Activated CD4-positive, alpha-beta T cell treated with anti-CD3 and anti-CD28 coated beads, Interleukin-2, amount 10 ng/mL, durations not matched to agents 24 days and 14 days (primary cell): ENCODE measurements at regions of chr2 and their contacts with region 1.

Region 1: DNA sequence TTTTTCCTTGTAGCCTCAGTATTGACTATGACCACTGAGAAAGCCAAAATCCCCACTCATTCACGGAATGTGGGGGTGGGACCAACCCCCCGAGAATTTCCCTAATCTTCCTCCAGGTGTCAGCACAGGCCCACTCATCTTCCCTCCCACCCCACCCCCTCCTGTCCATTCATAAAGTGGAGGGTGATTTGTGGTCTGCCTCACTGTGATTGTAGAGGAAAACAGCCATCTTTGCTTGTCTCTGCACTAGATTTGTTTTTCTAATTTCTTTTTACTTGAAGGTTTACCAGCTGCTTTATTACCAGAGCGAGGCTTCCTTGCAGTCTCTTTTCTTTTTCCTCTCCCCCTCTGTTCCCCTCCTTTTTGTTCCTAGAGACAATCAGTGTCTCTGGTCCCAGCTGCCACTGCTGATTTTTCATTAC is 171.8 kb downstream of the ICOS start:
- DNase-seq: peak; percentile 81
- H3K4me3 Mint-ChIP-seq: peak overlapping the region; percentile 75
- H3K27ac Mint-ChIP-seq: peak overlapping the region; percentile 93
- H3K4me1 Mint-ChIP-seq: peaks cover 64% of the 10 kb centered on the region
- H3K27me3 Mint-ChIP-seq: no peaks in the 10 kb centered on the region

Region 2: GRCh38 chr2:203543898-203544328 is 564.4 kb before region 1 on chr2:
- intact Hi-C with region 1: no loop called
- DNase-seq: no peak
- H3K4me3 Mint-ChIP-seq: no peak overlapping the region
- H3K27ac Mint-ChIP-seq: no peak overlapping the region
- H3K4me1 Mint-ChIP-seq: peaks cover 7% of the 10 kb centered on the region
- H3K27me3 Mint-ChIP-seq: peaks cover 19% of the 10 kb centered on the region

Region 3: DNA sequence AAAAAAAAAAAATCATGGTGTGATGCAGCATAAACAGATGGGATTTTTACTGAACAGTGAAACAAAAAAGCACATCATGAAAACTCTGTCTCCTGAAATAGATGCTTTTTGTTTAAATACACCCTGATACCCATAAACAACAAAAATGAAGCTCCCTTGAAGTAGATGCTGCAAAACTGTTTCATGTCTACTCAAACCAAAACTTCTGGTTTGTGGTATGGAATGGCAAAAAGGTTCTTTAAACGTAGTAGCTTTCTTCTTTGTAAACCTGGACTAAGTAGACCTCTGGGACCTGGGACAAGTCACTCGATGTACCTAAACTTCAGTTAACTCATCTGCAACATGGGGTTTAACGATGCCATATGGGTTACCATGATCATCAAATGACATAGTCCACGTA is 508.8 kb before region 1 on chr2:
- intact Hi-C with region 1: loop called (anchors 5 kb)
- DNase-seq: peak; percentile 66
- H3K4me3 Mint-ChIP-seq: no peak overlapping the region
- H3K27ac Mint-ChIP-seq: peak overlapping the region; percentile 21
- H3K4me1 Mint-ChIP-seq: peaks cover 30% of the 10 kb centered on the region
- H3K27me3 Mint-ChIP-seq: peaks cover 54% of the 10 kb centered on the region

Region 4: DNA sequence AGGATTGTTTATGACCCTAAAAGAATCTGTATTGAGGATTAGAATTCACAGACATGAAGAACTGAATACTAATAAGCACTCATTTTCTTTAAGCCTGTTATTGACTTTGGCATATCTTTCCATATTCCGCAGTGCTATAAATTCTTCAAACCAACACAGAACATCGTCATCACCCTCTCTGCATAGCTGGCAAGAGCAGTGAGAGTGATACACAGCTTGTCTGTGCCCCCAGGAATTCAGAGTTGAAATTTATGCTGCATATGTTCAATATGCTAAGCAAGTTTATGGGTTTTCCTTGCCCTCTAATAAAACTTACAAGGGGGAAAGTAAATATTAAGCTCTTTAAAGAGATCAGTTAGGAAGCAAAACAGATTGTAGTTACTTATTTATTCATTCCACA is 208.1 kb before region 1 on chr2:
- intact Hi-C with region 1: no loop called
- DNase-seq: no peak
- H3K4me3 Mint-ChIP-seq: no peak overlapping the region
- H3K27ac Mint-ChIP-seq: no peak overlapping the region
- H3K4me1 Mint-ChIP-seq: peaks cover 28% of the 10 kb centered on the region
- H3K27me3 Mint-ChIP-seq: no peaks in the 10 kb centered on the region

Region 5: DNA sequence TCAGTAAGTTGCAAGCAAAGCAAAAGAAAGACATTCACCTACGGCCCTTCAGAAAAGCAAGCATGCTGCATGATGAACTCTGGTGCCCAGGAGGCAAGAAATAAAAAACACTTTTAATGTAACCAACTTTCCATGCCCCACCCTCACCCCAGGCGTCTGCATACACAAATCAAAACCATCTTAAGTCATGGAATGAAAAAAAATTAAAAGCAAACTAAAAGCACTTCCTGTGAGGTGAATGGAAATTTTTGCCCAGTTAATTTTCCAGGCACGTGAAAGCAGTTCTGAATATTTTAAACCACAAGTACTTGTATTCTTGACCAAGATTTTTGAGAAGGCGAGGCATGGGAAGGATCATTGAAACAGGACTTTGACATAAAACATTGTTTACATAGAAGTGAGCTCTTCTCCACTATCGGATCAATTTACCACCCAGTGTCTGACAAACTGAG is 174.3 kb before region 1 on chr2:
- intact Hi-C with region 1: loop called (anchors 1 kb)
- DNase-seq: peak; percentile 86
- H3K4me3 Mint-ChIP-seq: peak overlapping the region; percentile 79
- H3K27ac Mint-ChIP-seq: peak overlapping the region; percentile 92
- H3K4me1 Mint-ChIP-seq: peaks cover 37% of the 10 kb centered on the region
- H3K27me3 Mint-ChIP-seq: no peaks in the 10 kb centered on the region

Region 6: GRCh38 chr2:204024503-204024902 is 83.8 kb before region 1 on chr2:
- intact Hi-C with region 1: loop called (anchors 2 kb)
- DNase-seq: peak; percentile 78
- H3K4me3 Mint-ChIP-seq: no peak overlapping the region
- H3K27ac Mint-ChIP-seq: no peak overlapping the region
- H3K4me1 Mint-ChIP-seq: peaks cover 51% of the 10 kb centered on the region
- H3K27me3 Mint-ChIP-seq: no peaks in the 10 kb centered on the region

Region 7: DNA sequence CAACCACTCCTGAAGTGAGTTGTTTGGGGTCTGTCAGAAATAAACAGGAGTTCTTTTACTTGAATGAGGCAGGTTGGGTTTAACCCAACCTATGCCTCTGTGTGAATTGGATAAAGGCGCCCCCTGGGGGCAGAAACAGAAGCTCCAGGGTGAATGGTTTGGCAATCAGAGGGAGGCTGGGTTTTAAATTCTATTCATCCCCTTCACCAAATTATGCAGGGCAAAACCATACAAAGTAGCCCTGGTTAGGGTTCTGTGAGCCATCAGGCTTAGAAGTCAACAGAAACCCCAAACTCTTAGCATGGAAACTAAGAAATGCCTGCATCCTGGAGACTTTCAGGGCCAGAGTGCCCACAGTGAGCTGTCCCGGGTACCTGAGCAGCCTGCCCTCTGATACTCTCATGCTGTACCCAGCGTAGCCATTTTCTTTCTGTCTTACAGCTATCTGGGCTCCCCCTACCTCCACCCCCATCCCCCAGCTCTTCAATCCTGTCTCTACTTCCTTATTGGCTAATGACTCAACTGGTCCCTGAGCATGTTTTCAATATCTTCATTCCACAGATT is 69.7 kb after region 1 on chr2:
- intact Hi-C with region 1: loop called (anchors 2 kb)
- DNase-seq: peak; percentile 90
- H3K4me3 Mint-ChIP-seq: no peak overlapping the region
- H3K27ac Mint-ChIP-seq: no peak overlapping the region
- H3K4me1 Mint-ChIP-seq: peaks cover 7% of the 10 kb centered on the region
- H3K27me3 Mint-ChIP-seq: peaks cover 32% of the 10 kb centered on the region

Region 8: GRCh38 chr2:205612636-205613035 is 1504.3 kb after region 1 on chr2:
- intact Hi-C with region 1: loop called (anchors 5 kb)
- DNase-seq: peak; percentile 80
- H3K4me3 Mint-ChIP-seq: peak overlapping the region; percentile 50
- H3K27ac Mint-ChIP-seq: peak overlapping the region; percentile 84
- H3K4me1 Mint-ChIP-seq: peaks cover 45% of the 10 kb centered on the region
- H3K27me3 Mint-ChIP-seq: peaks cover 5% of the 10 kb centered on the region